GM13977 (cell line): ENCODE measurements at regions of chr3 and their contacts with region 1.

Region 1: GRCh38 chr3:120245386-120245785 is 39.6 kb downstream of the GPR156 start:
- DNase-seq: no peak
- CTCF ChIP-seq: no peak

Region 2: GRCh38 chr3:120404876-120405275 is 159.5 kb after region 1 on chr3:
- in situ Hi-C with region 1: loop called (anchors 10 kb)
- DNase-seq: no peak
- CTCF ChIP-seq: no peak

Region 3: DNA sequence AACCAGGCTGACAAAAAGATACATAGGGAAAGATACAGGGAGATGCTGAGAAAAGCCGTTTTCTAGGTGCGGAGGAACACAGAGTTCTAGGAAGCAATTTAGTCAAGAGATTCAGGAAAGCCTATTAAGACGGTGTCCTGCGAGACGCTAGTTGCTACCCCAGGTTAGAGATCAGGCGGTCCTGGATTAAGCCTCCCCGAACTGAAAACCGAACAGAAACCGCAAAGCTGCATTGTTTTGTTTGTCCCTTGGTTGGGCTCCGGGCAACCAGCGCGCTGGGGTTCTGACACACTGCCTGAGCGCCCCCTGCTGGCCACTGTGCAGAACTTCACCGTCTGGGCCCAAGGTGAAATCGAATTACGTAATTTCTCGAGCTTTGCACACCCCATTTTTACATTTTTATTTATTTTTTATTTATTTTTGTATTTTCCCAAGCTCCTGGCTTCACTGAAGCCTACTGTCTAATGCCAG is 313.4 kb after region 1 on chr3:
- in situ Hi-C with region 1: loop called (anchors 10 kb)
- DNase-seq: peak; percentile 75
- CTCF ChIP-seq: peak; percentile 95

Region 4: GRCh38 chr3:120742198-120742849 is 496.9 kb after region 1 on chr3 and contains the starts of genes GTF2E1 and RABL3:
- in situ Hi-C with region 1: no loop called
- DNase-seq: peak; percentile 97
- CTCF ChIP-seq: no peak